WTC11 (cell line): ENCODE measurements at regions of chr12 and their contacts with region 1.

Region 1: DNA sequence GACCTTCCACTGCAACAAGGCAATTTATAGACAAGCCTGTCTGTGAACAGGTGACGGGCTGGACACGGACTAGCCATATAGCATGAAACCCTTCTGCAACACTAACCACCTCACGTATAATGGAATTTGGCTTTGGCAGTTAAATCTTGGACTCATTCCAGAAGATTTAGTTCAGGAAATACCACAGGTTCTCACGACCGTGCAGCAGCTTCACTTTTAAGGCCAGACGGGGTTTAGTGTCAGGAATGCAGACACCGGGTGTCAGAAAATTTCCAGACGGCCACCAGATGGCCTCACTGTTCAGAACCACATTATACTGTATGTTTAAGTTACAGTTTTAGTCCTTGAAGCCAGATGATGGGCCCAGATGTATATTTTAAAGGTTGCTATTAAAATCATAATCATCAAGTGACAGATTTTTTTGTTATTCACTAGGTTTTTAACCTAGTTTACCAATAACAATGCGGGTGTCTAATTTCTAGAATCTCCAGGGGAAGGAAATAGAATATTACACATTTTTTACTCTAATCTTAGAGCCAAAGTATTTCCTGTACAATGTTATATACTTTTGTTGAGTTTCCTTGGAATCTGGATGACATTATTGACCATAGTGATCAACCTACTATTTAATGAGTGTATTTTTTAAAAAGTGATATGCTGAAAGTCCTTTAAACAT is 90.5 kb upstream of the TMPO start:
- DNase-seq: peak; percentile 57
- ATAC-seq: peak; percentile 74
- H3K4me3 Mint-ChIP-seq: no peak overlapping the region
- H3K27ac Mint-ChIP-seq: no peak overlapping the region; the same call in 1 of the 2 replicates
- H3K4me1 Mint-ChIP-seq: peaks cover 4% of the 10 kb centered on the region
- H3K27me3 Mint-ChIP-seq: no peaks in the 10 kb centered on the region
- CTCF ChIP-seq: peak; percentile 36; the same call in 1 of the 2 replicates

Region 2: DNA sequence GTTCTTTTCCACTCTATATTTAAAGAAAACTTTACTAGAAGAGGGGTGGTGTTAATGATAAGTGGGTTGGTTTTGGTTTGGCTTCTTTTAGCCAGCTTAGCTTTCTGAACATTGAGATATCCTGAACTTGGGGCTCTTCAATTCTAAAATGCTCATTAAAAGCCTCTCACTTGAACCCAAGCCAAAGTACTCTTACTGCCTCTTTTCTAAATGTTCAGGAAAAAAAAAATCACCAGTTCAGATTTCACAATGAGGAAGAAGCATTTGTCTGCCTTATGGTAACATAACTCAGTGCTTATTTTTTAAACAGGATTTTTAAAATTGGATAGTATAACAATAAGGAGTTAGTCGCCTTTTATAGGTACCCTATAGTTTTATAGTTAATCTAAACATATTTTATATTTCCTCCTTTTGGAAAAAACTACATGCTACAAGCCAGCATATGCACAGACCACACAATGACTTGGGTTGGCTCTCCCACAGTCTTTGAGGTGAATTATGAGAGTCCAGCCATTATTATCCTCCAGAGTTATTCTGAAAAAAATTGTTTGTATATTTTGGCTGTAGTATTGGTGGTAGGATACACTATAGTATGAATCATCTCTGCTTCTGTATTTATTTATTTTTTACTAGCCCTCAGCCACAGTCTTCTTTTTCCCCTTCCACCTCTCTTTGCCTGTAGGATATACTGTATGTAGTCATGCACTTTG is 105.0 kb before region 1 on chr12:
- CTCF ChIA-PET with region 1: no interaction called
- POLR2A ChIA-PET with region 1: no interaction called
- DNase-seq: no peak
- ATAC-seq: no peak
- H3K4me3 Mint-ChIP-seq: no peak overlapping the region
- H3K27ac Mint-ChIP-seq: no peak overlapping the region
- H3K4me1 Mint-ChIP-seq: no peaks in the 10 kb centered on the region
- H3K27me3 Mint-ChIP-seq: no peaks in the 10 kb centered on the region
- CTCF ChIP-seq: no peak

Region 3: GRCh38 chr12:98379106-98379505 is 45.8 kb before region 1 on chr12:
- CTCF ChIA-PET with region 1: no interaction called
- POLR2A ChIA-PET with region 1: no interaction called
- DNase-seq: no peak
- ATAC-seq: no peak
- H3K4me3 Mint-ChIP-seq: no peak overlapping the region
- H3K27ac Mint-ChIP-seq: no peak overlapping the region
- H3K4me1 Mint-ChIP-seq: no peaks in the 10 kb centered on the region
- H3K27me3 Mint-ChIP-seq: no peaks in the 10 kb centered on the region
- CTCF ChIP-seq: no peak

Region 4: GRCh38 chr12:98456576-98457573 is 32.0 kb after region 1 on chr12:
- CTCF ChIA-PET with region 1: interaction called, 11 read pairs
- POLR2A ChIA-PET with region 1: no interaction called
- DNase-seq: peak; percentile 74
- ATAC-seq: peak; percentile 95
- H3K4me3 Mint-ChIP-seq: peak overlapping the region; percentile 65
- H3K27ac Mint-ChIP-seq: peak overlapping the region; percentile 82
- H3K4me1 Mint-ChIP-seq: peaks cover 10% of the 10 kb centered on the region
- H3K27me3 Mint-ChIP-seq: peaks cover 21% of the 10 kb centered on the region
- CTCF ChIP-seq: no peak

Region 5: GRCh38 chr12:98578821-98579220 is 154.0 kb after region 1 on chr12:
- CTCF ChIA-PET with region 1: no interaction called
- POLR2A ChIA-PET with region 1: no interaction called
- DNase-seq: no peak
- ATAC-seq: no peak; the same call in 1 of the 2 replicates
- H3K4me3 Mint-ChIP-seq: no peak overlapping the region
- H3K27ac Mint-ChIP-seq: no peak overlapping the region
- H3K4me1 Mint-ChIP-seq: no peaks in the 10 kb centered on the region
- H3K27me3 Mint-ChIP-seq: no peaks in the 10 kb centered on the region
- CTCF ChIP-seq: no peak